ENCODE measurements at regions of chr19 and their contacts with region 1.

Region 1: DNA sequence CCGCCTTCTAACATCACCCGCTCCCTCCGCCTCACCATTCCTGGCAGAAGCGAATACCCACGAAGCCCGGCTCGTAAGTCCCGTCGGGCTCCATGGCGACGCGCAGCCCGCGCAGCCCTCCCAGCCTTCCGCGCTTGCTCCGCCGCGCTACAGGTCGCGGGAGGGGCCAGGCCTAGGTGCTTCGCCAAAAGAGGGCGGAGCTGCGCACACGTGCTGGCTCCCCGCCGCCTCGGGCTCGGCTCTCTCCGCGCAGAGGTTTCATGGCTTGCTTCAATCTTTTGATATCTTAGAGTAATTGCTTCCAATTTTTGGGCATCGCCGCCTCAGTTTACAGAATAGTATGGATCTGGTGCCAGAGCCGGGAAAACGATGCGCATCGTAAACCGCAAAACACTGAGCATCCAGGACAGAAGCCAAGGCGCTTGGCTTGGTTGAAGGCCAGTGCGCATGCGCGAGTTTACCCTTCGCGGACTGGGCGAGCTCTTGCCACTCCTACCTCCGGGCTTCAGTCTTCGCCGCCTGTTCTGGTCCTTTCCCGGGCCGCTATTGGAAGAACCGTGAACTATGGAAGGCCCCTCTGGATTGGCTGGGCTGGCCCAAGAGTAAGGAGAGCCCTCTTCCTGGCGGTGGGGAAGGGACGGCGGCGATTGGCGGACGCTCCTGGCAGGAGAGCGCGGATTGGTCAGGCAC is at the start of gene POLR2I:
- DNase-seq: peak; percentile 100
- H3K4me3 ChIP-seq: peak within 1 kb of the TSS; percentile 68 to 93 (median 84)
- H3K27ac ChIP-seq: peak within 1 kb of the TSS; percentile 85
- H3K4me1 ChIP-seq: peaks cover 24% of the 10 kb centered on the region
- H3K27me3 ChIP-seq: no peaks in the 10 kb centered on the region
- CTCF ChIP-seq: no peak
- total RNA-seq, gene POLR2I: 28.7 to 84.5 TPM

Region 2: GRCh38 chr19:36014029-36014924 is 100.6 kb before region 1 on chr19 and contains the start of gene ALKBH6:
- CTCF ChIA-PET with region 1: no interaction called
- dilution Hi-C with region 1: no loop called
- in situ Hi-C with region 1: no loop called
- intact Hi-C with region 1: loop called (anchors 1 kb)
- DNase-seq: peak; percentile 100
- H3K4me3 ChIP-seq: peak within 1 kb of the TSS; percentile 74 to 98 (median 74)
- H3K27ac ChIP-seq: peak within 1 kb of the TSS; percentile 68
- H3K4me1 ChIP-seq: peaks cover 3% of the 10 kb centered on the region
- H3K27me3 ChIP-seq: no peaks in the 10 kb centered on the region
- CTCF ChIP-seq: peak in 1 of 2 donors; percentile 11
- total RNA-seq, gene ALKBH6: 16.2 to 31.4 TPM

Region 3: GRCh38 chr19:36030264-36031148 is 84.4 kb before region 1 on chr19:
- CTCF ChIA-PET with region 1: no interaction called
- dilution Hi-C with region 1: no loop called
- in situ Hi-C with region 1: no loop called
- intact Hi-C with region 1: loop called (anchors 1 kb)
- DNase-seq: peak; percentile 53
- H3K4me3 ChIP-seq: no peak overlapping the region
- H3K27ac ChIP-seq: no peak overlapping the region
- H3K4me1 ChIP-seq: no peaks in the 10 kb centered on the region
- H3K27me3 ChIP-seq: no peaks in the 10 kb centered on the region
- CTCF ChIP-seq: peak; percentile 33 to 70

Region 4: GRCh38 chr19:36060430-36060829 is 54.5 kb before region 1 on chr19:
- CTCF ChIA-PET with region 1: no interaction called
- dilution Hi-C with region 1: no loop called
- in situ Hi-C with region 1: no loop called
- intact Hi-C with region 1: loop called (anchors 1 kb)
- DNase-seq: peak; percentile 17
- H3K4me3 ChIP-seq: no peak overlapping the region
- H3K27ac ChIP-seq: no peak overlapping the region
- H3K4me1 ChIP-seq: peaks cover 5% of the 10 kb centered on the region
- H3K27me3 ChIP-seq: no peaks in the 10 kb centered on the region
- CTCF ChIP-seq: peak; percentile 52 to 77

Region 5: GRCh38 chr19:36139473-36140303 is 24.8 kb after region 1 on chr19 and contains the start of gene CAPNS1:
- CTCF ChIA-PET with region 1: no interaction called
- dilution Hi-C with region 1: no loop called
- in situ Hi-C with region 1: no loop called
- intact Hi-C with region 1: loop called (anchors 1 kb)
- DNase-seq: peak; percentile 95
- H3K4me3 ChIP-seq: peak within 1 kb of the TSS; percentile 77 to 87 (median 83)
- H3K27ac ChIP-seq: peak within 1 kb of the TSS; percentile 98
- H3K4me1 ChIP-seq: peaks cover 34% of the 10 kb centered on the region
- H3K27me3 ChIP-seq: no peaks in the 10 kb centered on the region
- CTCF ChIP-seq: peak; percentile 5 to 28
- total RNA-seq, gene CAPNS1: 328 to 1,073 TPM

Region 6: DNA sequence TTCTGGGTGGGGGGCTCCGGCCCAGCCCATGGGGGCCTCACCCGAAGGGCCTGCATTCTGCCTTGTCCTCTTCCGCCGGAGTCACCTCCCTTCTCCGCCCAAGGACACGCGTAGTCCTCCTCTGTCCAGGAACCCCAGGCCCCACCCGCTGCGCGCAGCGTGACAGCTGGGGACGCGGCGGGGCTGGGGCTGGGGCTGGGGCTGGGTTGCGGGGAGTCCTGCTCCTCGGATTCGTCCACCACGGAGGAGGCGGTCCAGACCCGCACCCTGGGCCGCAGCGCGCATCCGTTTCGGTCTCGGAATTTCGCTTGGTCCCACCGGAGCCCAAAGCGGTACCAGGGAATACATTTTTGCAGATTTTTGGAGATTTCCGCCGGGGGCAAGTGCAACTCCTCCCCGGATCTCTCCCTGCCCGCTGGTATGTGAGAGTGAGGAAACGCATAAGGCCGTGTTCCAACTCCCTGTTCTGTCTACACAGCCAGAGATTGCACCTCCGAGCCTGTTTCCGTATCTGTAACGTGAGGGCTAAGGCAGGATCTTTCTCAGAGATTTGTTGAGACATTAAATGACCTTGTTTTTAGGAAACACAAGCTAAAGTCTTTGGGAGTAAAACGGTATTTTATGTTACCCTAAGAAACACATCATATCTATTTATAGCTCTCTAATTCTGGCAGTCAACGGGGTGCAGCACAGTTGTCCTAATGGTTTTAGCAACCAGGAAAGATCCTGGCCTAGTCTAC is 37.6 kb after region 1 on chr19 and contains the start of gene COX7A1:
- CTCF ChIA-PET with region 1: no interaction called
- dilution Hi-C with region 1: no loop called
- in situ Hi-C with region 1: no loop called
- intact Hi-C with region 1: no loop called
- DNase-seq: no peak
- H3K4me3 ChIP-seq: no peak within 1 kb of the TSS
- H3K27ac ChIP-seq: no peak within 1 kb of the TSS
- H3K4me1 ChIP-seq: peaks cover 23% of the 10 kb centered on the region
- H3K27me3 ChIP-seq: no peaks in the 10 kb centered on the region
- CTCF ChIP-seq: no peak
- total RNA-seq, gene COX7A1: 1.0 TPM in 1 of 2 donors, not detected in the other

Region 7: GRCh38 chr19:36214386-36215275 is 99.7 kb after region 1 on chr19 and contains the starts of genes ZNF146 and ZNF565:
- CTCF ChIA-PET with region 1: no interaction called
- dilution Hi-C with region 1: no loop called
- in situ Hi-C with region 1: no loop called
- intact Hi-C with region 1: no loop called
- DNase-seq: peak; percentile 98
- H3K4me3 ChIP-seq: peak within 1 kb of the TSS; percentile 88 to 95 (median 88)
- H3K27ac ChIP-seq: peak within 1 kb of the TSS; percentile 85
- H3K4me1 ChIP-seq: peaks cover 7% of the 10 kb centered on the region
- H3K27me3 ChIP-seq: no peaks in the 10 kb centered on the region
- CTCF ChIP-seq: no peak
- total RNA-seq, gene ZNF146: 74.5 to 77.3 TPM
- total RNA-seq, gene ZNF565: 2.8 to 3.5 TPM

Region 8: DNA sequence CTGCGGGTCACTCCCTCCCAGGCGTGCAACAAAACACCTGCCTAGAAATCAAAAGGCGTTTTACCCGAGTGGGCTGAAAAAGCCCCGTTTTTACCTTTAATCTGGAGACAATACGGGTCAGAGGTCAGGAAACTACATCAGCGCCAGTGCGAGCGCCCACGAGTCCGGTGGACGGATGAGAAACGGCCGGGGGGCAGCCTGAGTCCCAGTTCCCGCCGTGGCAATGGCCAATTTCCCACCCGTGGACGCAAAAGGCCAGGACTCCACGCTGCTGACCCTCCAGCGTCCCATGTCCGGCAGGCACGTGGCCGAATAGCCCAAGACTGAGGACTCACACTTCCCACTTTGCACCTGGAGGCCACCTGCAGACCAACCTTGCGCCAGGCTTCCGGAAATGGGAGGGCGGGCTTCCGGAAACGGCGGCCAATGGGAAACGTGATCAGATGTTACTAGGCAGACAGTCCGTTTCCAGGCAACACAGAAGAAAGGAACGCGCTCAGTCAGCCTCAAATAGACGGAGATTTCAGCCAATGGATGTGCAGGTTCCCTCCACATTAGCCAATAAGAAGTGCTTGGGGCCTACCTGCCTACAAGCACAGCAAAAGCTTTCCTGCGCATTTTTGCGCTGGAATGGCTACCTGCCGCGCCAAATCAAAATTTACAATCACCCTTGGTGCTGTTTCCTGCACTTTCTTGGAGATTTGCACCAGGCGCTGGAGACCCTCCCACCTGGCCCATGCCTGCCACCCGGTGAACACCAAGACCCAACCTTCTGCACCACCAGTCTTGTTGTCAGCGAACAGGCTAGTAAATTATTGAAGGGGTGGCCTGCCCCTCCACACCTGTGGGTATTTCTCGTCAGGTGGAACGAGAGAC is 216.7 kb after region 1 on chr19:
- CTCF ChIA-PET with region 1: no interaction called
- dilution Hi-C with region 1: no loop called
- in situ Hi-C with region 1: no loop called
- intact Hi-C with region 1: loop called (anchors 5 kb)
- DNase-seq: peak; percentile 91
- H3K4me3 ChIP-seq: peak overlapping the region; percentile 57 to 68 (median 63)
- H3K27ac ChIP-seq: no peak overlapping the region
- H3K4me1 ChIP-seq: no peaks in the 10 kb centered on the region
- H3K27me3 ChIP-seq: no peaks in the 10 kb centered on the region
- CTCF ChIP-seq: no peak

Region 9: DNA sequence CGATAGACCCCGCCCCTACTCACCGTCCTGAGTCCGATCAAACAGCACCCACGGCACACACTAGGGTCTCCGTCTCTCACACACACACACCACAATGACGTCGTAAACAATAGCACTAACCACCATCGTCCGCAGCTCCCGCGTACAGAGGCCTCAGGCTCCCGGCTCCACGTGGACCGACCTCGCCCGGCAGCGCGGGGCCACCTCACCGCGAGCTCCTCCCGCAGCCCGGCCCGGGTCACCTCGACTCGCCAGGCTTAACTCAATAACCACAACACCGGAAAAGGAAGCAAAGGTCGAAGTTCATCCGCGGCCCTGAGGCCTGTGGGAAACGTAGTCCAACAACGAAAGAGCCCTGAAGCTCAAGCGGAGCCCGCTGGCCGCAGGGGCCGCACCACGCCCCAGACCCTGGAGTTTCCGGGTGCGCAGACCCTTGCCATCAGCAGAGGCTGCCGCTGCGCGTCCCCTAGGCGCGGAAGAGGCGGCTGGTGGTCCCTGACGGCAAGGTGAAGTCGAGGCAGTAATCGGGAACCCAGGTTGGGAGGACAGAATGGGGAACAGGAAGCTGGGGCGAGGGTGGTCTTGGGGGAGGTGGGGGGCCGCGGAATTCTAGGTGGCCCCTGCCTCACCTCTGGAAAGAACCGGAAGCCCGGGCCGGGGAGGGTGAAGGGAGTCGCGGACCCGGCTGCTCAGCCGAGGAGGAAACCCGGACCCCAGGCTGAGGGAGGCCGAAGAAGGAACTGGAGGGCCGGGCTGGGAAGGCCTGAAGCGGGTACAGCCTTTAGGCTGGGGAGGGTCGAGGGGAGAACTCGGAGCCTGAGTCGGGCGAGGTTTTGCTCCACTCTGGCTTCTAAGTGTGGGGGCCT is 458.3 kb after region 1 on chr19 and contains the start of gene ZNF529:
- CTCF ChIA-PET with region 1: no interaction called
- dilution Hi-C with region 1: no loop called
- in situ Hi-C with region 1: no loop called
- intact Hi-C with region 1: loop called (anchors 2 kb)
- DNase-seq: peak; percentile 87
- H3K4me3 ChIP-seq: peak within 1 kb of the TSS; percentile 53 to 100 (median 84)
- H3K27ac ChIP-seq: peak within 1 kb of the TSS; percentile 70
- H3K4me1 ChIP-seq: peaks cover 6% of the 10 kb centered on the region
- H3K27me3 ChIP-seq: no peaks in the 10 kb centered on the region
- CTCF ChIP-seq: no peak
- total RNA-seq, gene ZNF529: 10.0 to 12.4 TPM

Measured in mammary epithelial cell (primary cell).